BJ (cell line): ENCODE measurements at regions of chr12 and their contacts with region 1.

Region 1: GRCh38 chr12:117119592-117120198 is 20.5 kb upstream of the TESC start:
- DNase-seq: no peak
- H3K4me3 ChIP-seq: no peak overlapping the region
- H3K27me3 ChIP-seq: no peaks in the 10 kb centered on the region
- CTCF ChIP-seq: peak; percentile 50

Region 2: DNA sequence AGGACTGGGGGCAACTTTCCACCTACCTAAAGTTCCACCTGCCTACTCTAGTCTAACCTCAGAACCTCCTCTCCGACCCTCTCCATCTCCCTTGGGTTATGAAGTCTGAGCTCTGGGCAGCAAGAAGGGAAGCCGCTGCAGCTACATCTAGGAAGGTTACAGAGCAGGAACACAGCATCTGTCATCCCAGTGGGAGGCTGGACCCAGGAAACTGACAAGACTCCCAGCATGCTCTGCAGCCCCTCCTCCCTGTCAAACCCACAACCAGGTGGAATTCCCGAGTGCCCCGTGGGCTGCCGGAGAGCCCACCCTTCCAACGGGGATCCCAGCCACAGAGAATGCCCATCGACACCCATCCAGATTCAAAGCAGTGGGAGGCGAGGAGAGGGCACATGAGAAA is 22.5 kb before region 1 on chr12:
- CTCF ChIA-PET with region 1: interaction called, 4 read pairs
- POLR2A ChIA-PET with region 1: interaction called, 24 read pairs
- DNase-seq: no peak
- H3K4me3 ChIP-seq: no peak overlapping the region
- H3K27me3 ChIP-seq: peaks cover 45% of the 10 kb centered on the region
- CTCF ChIP-seq: no peak